ENCODE measurements at regions of chr2 and their contacts with region 1.

Region 1: DNA sequence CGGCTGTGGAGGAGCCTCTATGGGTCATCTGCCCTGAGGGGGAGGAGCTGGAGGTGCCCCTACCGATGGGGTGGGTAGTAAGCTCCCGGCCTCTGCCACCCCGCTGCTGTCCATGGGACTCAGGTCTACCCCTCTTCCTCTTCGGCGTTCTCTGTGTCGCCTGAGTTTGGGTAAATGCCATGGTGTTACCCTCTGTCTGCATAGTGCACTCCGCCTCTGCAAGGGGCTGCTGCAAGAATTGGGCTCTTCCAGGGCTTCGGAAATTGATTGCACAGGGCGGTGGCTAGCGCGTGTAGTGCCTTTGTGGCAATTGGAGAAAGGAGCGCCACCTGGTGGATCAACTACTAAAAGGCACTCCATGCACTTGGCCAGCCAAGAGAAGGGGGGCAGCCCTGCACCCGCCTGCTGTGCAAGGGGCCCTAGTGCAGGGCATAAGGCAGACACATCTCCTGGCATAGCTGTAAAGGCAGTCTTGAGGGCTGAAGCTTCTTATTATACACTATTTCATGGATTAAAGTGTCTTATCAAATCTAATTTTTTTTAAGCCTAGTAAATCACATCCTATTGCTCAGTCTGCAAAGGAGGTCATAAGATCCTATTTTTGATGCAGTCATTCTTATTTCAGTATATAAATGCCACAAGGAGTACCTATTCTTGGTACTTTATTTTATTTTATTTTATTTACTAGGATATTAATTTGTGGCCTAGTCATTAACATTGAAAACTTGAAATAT is 308.9 kb downstream of the PDE11A start:
- DNase-seq: peak; percentile 67
- H3K4me3 ChIP-seq: no peak overlapping the region
- H3K27ac ChIP-seq: no peak overlapping the region
- H3K4me1 ChIP-seq: peaks cover 0 to 4% of the 10 kb centered on the region in 2 experiments; a peak in 1 of 4 replicates
- H3K27me3 ChIP-seq: no peaks in the 10 kb centered on the region
- CTCF ChIP-seq: peak; percentile 78
- EP300 ChIP-seq: no peak
- RAD21 ChIP-seq: peak; percentile 54

Region 2: DNA sequence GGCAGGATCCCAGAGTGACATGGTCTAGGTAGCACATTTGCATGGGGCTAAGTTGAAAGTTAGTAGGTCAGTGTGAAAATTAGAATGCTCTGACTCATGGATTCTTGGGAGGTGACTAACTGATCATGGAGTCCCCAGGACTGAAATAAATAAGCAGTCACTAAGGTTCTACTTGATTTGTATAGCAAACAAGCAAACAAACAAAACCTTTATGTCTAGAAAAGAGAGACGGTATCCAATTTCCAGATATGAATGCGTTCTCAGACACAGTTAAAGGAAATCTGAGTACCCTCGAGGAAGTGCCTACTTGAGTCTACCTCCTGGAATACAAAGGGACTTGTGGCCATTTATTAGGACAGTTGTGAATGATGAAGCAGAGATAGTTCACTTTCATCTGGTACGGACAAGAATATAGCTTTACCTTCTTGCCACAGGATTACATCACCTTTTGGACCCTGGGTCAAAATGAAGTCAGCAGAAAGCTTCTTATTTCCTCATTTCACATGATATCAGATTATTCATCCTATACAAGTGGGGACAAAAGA is 425.4 kb before region 1 on chr2:
- CTCF ChIA-PET with region 1: interaction called, 22 read pairs
- POLR2A ChIA-PET with region 1: no interaction called
- DNase-seq: no peak
- H3K4me3 ChIP-seq: no peak overlapping the region
- H3K27ac ChIP-seq: peak overlapping the region in 1 of 2 experiments; percentile 17; a peak in 1 of 4 replicates
- H3K4me1 ChIP-seq: peaks cover 4 to 14% of the 10 kb centered on the region in 2 experiments; a peak in 2 of 4 replicates
- H3K27me3 ChIP-seq: no peaks in the 10 kb centered on the region
- CTCF ChIP-seq: no peak
- EP300 ChIP-seq: no peak
- RAD21 ChIP-seq: no peak

Region 3: DNA sequence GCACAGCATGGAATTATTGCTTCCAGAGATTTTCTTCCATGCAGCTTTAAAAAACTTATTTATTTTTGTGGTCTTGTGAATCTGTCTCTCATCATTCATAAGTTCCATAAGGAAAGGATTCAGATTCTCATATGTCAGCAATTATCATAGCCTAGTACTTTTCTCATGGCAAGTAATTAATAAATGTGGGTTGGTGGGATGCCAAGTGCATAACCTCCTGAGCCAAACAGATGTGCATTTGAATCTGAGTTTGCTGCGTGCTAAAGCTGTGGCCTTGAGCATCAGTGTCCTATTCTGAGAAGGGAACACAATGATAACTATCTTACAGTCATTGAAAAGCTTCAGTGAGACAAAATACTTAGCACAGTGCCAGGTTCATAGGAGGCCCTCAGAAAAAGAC is 23.0 kb before region 1 on chr2:
- CTCF ChIA-PET with region 1: interaction called, 11 read pairs
- POLR2A ChIA-PET with region 1: no interaction called
- DNase-seq: peak; percentile 23
- H3K4me3 ChIP-seq: no peak overlapping the region
- H3K27ac ChIP-seq: no peak overlapping the region; a peak in 2 of 4 replicates
- H3K4me1 ChIP-seq: peaks cover 0 to 10% of the 10 kb centered on the region in 2 experiments; a peak in 1 of 4 replicates
- H3K27me3 ChIP-seq: no peaks in the 10 kb centered on the region
- CTCF ChIP-seq: no peak
- EP300 ChIP-seq: peak in 1 of 2 experiments; percentile 58; a peak in 1 of 4 replicates
- RAD21 ChIP-seq: no peak

Region 4: DNA sequence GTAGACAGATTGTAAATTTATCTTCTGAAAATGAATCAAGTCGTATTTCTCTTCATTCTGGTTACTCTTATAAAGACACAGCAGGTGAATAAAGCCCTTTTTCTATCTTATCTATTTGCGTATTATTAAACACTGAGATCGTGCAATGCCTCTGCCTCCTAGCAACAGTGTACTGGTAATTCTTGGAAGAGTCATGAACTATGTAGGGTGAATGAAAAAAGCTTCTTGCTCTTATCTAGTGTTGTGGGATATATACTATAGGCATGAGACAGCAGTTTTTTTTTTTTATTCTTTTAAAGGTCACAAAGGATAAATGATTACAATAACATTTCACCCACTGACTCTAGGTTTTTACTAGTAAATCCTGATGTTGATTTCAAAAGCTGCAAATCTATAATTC is 15.3 kb before region 1 on chr2:
- CTCF ChIA-PET with region 1: interaction called, 13 read pairs
- POLR2A ChIA-PET with region 1: no interaction called
- DNase-seq: no peak
- H3K4me3 ChIP-seq: no peak overlapping the region
- H3K27ac ChIP-seq: no peak overlapping the region
- H3K4me1 ChIP-seq: peaks cover 0 to 2% of the 10 kb centered on the region in 2 experiments; a peak in 1 of 4 replicates
- H3K27me3 ChIP-seq: no peaks in the 10 kb centered on the region
- CTCF ChIP-seq: no peak
- EP300 ChIP-seq: no peak
- RAD21 ChIP-seq: no peak

Measured in SK-N-SH (cell line).